A549 (cell line): ENCODE measurements at regions of chr20 and their contacts with region 1.

Region 1: DNA sequence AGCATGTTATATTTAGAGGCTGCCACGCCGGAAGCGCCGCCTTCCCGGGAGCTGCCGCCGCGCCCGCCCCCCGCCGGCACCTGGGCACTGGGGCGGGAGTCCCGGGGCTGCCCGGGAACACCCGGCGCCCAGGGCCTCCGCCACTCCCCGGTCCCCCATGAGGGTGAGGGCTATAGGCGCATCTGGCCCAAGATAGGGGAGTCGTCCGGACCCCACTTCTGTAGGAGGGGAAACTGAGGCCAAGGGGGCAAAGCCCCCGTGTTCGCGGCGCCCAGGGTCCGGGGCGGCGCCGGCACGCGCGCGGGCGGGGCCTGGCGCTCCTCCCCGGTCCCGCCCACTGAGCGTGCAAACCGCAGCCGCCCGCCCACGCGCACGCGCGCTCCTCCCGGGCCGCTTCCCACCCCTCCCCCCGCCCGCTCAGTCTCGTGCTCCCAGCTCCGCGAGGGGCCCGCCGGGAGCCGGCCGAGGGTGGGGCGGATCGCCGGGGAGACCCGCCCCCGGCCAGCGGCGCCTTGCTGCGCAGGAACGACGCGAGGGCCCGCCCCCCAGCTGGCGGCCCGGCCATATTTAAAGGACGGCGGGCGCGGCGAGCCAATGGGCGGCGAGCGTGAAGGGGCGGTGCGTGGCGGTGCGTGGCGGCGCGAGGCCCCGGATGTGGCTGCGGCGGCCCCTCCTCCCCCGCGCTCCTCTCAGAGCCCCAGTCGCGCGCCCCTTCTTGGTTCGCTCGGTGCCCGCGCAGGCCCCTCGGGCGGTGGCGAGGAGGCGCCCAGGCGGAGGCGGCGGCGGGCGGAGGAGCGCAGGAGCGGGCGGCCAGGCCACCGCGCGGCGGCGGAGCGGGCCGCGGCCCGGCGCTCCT is at the start of gene LSM14B:
- DNase-seq: peak; percentile 93 to 96
- ATAC-seq: peak; percentile 75 to 83
- H3K4me3 ChIP-seq: peak within 1 kb of the TSS; percentile 69
- H3K27ac ChIP-seq: peak within 1 kb of the TSS; percentile 90 to 98
- H3K4me1 ChIP-seq: peaks cover 11% of the 10 kb centered on the region
- CTCF ChIP-seq: no peak
- EP300 ChIP-seq: no peak; a peak in 1 of 5 replicates
- POLR2A ChIP-seq: peak; percentile 38; the same call in 1 of the 2 replicates
- RAD21 ChIP-seq: no peak
- polyA plus RNA-seq, gene LSM14B: 18.3 and 22.7 TPM in 2 replicates

Region 2: DNA sequence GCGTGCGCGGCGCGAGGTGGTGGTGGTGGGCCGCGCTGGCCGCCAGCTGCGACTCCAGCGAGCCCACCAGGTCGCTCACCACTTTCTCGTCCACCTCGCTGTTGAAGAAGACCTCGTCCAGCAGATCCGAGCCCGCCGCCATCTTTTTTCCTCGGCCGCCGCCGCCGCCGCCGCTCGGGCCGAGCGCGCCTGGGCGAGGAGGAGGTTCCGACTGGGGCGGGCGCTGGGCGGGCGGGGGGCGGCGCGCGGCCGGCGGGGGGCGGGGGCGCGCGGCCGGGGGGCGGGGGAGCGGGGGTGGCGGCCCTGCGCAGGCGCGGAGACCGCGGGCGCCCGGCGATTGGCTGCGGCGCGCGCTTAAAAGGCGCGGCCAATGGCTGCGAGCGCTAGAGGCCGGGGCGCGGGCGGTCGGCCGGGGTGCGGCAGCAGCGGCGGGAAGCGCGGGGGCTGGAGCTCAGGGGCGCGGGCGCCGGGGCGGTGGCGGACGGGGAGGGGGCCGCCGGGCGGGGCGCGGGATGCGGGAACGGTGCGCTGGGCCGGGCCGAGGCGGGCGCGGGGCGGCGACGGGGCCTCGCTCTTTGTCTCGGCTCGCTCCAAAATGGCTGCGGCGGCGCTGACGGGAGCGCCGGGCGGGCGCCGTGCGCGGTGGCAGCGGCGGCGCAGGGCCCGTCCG is 56.2 kb before region 1 on chr20 and contains the start of gene TAF4:
- CTCF ChIA-PET with region 1: interaction called, 7 read pairs
- POLR2A ChIA-PET with region 1: interaction called, 37 read pairs
- DNase-seq: peak; percentile 72 to 85
- ATAC-seq: peak; percentile 70 to 75
- H3K4me3 ChIP-seq: peak within 1 kb of the TSS; percentile 89
- H3K27ac ChIP-seq: peak within 1 kb of the TSS; percentile 97 to 99
- H3K4me1 ChIP-seq: peaks cover 20% of the 10 kb centered on the region
- CTCF ChIP-seq: no peak
- EP300 ChIP-seq: no peak
- POLR2A ChIP-seq: peak; percentile 94
- RAD21 ChIP-seq: no peak
- polyA plus RNA-seq, gene TAF4: 5.7 and 6.1 TPM in 2 replicates

Region 3: GRCh38 chr20:62136283-62137091 is 14.5 kb after region 1 on chr20:
- CTCF ChIA-PET with region 1: interaction called, 15 read pairs
- POLR2A ChIA-PET with region 1: interaction called, 12 read pairs
- DNase-seq: peak; percentile 73 to 78
- ATAC-seq: peak; percentile 65 to 78; a peak in 5 of 6 replicates
- H3K4me3 ChIP-seq: no peak overlapping the region
- H3K27ac ChIP-seq: no peak overlapping the region
- H3K4me1 ChIP-seq: peaks cover 7% of the 10 kb centered on the region
- CTCF ChIP-seq: peak; percentile 81
- EP300 ChIP-seq: no peak
- POLR2A ChIP-seq: no peak
- RAD21 ChIP-seq: peak; percentile 65 to 72

Region 4: DNA sequence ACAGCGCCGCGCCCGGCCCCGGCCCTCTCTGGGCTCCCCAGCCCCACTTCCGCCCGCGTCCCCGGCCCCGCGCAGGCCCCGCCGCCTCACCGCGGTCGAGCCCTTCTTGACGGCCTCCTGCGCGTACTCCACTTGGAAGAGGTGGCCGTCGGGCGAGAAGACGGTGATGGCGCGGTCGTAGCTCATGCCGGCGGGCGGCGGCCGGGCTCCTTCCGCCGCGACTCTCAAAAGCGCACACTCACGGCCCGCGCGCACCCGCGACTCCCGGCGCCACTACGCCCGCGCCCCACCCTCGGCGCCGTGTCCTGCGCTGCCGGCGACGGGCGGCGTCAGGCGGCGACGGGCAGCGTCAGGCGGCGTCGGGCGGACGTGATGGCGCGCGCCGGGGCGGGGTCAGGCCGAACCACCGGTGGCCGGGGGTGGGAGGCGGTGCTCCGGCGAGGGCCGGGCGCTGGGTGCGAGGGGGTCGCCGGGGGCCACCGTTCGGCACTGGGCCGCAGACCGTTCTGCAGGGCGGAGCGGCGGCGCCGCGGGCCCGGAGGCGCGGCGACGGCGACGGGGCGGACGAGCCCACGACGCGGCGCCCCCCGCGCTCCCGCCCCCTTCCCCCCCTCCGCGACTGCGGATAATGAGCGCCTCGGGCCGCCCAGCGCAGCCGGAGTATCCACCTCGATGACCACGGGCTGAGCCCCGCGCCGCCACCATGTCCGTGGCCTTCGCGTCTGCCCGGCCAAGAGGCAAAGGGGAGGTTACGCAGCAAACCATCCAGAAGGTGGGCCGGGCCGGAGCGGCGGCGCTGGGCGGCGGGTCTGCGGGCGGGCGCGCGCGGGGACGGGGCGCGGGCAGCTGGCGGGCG is 21.3 kb after region 1 on chr20 and contains the starts of genes PSMA7 and SS18L1:
- CTCF ChIA-PET with region 1: interaction called, 8 read pairs
- POLR2A ChIA-PET with region 1: interaction called, 12 read pairs
- DNase-seq: peak; percentile 75 to 90
- ATAC-seq: peak; percentile 82 to 84
- H3K4me3 ChIP-seq: peak within 1 kb of the TSS; percentile 98
- H3K27ac ChIP-seq: peak within 1 kb of the TSS; percentile 98
- H3K4me1 ChIP-seq: peaks cover 18% of the 10 kb centered on the region
- CTCF ChIP-seq: no peak
- EP300 ChIP-seq: no peak
- POLR2A ChIP-seq: peak; percentile 85
- RAD21 ChIP-seq: no peak
- polyA plus RNA-seq, gene PSMA7: 494 and 562 TPM in 2 replicates
- polyA plus RNA-seq, gene SS18L1: 7.4 and 7.5 TPM in 2 replicates

Region 5: DNA sequence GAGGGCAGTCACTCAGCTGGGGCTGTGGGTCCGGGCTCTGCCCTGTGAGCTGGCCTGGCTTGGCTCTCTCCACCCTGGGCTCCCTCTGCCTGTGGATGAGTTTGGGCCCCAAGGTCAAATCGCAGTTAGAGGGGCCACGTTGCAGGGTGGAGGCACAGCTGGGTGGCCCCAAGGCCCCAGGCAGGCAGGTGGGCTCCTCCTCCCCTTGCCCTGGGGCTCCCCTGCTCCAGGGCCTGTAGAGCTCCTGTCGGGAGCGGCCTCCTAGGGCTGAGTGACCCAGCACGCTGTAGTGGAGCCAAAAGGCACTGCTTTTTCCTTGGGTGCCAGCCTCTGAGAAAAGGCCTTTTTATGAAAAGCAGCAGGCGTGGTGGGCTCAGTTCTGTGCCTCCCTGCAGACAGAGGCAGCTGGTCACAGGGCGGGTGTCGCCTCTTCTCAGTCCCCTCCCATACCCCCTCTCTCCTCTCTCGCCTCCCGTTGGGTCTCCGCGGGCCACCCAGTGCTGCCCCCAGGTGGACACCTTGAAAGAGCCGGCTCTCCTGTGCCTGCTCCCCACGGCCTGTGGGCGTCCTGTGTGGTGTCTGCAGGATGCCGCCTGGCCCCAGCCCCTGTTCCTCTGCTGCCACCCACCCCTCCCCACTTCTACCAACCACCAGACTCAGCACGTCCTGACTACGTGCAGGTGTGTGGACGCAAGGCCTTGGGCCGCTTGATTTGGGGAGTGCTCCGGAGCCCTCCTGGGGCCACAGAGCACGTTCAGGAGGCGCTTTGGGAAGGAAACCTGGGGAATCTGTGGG is 34.8 kb after region 1 on chr20:
- CTCF ChIA-PET with region 1: interaction called, 11 read pairs
- POLR2A ChIA-PET with region 1: no interaction called
- DNase-seq: peak; percentile 59 to 78
- ATAC-seq: peak; percentile 87 to 96
- H3K4me3 ChIP-seq: no peak overlapping the region
- H3K27ac ChIP-seq: peak overlapping the region in 1 of 2 experiments; percentile 47; a peak in 1 of 6 replicates
- H3K4me1 ChIP-seq: peaks cover 18% of the 10 kb centered on the region
- CTCF ChIP-seq: peak; percentile 63
- EP300 ChIP-seq: no peak
- POLR2A ChIP-seq: no peak
- RAD21 ChIP-seq: peak; percentile 52 to 53